SK-N-SH (cell line): ENCODE measurements at regions of chr16 and their contacts with region 1.

Region 1: GRCh38 chr16:1964506-1965395 is at the start of gene RPS2:
- DNase-seq: peak; percentile 100
- H3K4me3 ChIP-seq: peak within 1 kb of the TSS; percentile 86 to 98
- H3K27ac ChIP-seq: peak within 1 kb of the TSS; percentile 76 to 90
- H3K4me1 ChIP-seq: peaks cover 0 to 41% of the 10 kb centered on the region in 2 experiments; a peak in 1 of 4 replicates
- H3K27me3 ChIP-seq: no peaks in the 10 kb centered on the region
- CTCF ChIP-seq: 0 out of 2 replicates have a peak, but pooled peaks have one; percentile 5
- EP300 ChIP-seq: peak; percentile 16 to 27; a peak in 1 of 4 replicates
- RAD21 ChIP-seq: no peak
- polyA plus RNA-seq, gene RPS2: 4,622 and 6,384 TPM in 2 replicates

Region 2: DNA sequence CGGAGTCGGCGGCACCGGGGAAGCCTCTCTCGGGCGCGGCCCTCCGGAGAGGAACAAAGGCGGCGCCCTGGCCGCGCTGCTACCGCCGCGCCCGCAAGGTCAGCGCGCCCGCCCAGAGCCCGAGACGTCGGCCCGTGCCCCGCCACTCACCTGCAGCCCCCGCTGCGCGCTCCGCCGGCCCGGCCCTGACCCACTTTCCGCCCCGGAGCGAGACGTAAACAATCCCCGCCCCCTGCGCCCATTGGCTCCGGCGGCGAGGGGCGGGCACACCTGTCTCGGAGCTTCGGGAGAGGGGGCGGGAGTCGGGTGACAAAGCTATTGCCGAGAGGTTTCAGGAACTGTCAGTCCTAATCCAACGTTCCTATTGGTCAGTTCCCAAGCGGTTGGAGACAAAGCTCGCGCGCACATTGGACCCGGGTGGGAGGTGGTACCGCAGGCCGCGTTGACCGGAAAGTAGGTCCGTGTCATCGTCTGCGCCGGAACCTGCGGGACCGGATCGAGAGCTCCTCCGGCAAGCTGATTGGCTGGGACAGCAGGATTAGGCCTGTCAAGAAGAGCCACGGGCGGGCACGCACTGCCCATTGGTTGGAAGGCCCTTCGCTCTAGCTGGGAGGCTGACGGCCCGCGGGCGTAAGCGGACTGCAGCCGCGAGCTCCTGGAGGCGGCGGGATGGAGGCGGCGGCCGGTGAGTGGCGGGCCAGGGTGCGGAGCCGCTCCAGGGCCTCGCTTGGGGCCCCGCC is 182.2 kb before region 1 on chr16 and contains the starts of genes NUBP2 and SPSB3:
- CTCF ChIA-PET with region 1: no interaction called
- POLR2A ChIA-PET with region 1: interaction called, 10 read pairs
- DNase-seq: peak; percentile 97
- H3K4me3 ChIP-seq: peak within 1 kb of the TSS; percentile 84 to 90
- H3K27ac ChIP-seq: peak within 1 kb of the TSS; percentile 48 to 53
- H3K4me1 ChIP-seq: peaks cover 0 to 8% of the 10 kb centered on the region in 2 experiments; a peak in 1 of 4 replicates
- H3K27me3 ChIP-seq: no peaks in the 10 kb centered on the region
- CTCF ChIP-seq: no peak
- EP300 ChIP-seq: no peak
- RAD21 ChIP-seq: no peak
- polyA plus RNA-seq, gene NUBP2: 73.2 and 75.4 TPM in 2 replicates
- polyA plus RNA-seq, gene SPSB3: 40.6 and 41.6 TPM in 2 replicates

Region 3: DNA sequence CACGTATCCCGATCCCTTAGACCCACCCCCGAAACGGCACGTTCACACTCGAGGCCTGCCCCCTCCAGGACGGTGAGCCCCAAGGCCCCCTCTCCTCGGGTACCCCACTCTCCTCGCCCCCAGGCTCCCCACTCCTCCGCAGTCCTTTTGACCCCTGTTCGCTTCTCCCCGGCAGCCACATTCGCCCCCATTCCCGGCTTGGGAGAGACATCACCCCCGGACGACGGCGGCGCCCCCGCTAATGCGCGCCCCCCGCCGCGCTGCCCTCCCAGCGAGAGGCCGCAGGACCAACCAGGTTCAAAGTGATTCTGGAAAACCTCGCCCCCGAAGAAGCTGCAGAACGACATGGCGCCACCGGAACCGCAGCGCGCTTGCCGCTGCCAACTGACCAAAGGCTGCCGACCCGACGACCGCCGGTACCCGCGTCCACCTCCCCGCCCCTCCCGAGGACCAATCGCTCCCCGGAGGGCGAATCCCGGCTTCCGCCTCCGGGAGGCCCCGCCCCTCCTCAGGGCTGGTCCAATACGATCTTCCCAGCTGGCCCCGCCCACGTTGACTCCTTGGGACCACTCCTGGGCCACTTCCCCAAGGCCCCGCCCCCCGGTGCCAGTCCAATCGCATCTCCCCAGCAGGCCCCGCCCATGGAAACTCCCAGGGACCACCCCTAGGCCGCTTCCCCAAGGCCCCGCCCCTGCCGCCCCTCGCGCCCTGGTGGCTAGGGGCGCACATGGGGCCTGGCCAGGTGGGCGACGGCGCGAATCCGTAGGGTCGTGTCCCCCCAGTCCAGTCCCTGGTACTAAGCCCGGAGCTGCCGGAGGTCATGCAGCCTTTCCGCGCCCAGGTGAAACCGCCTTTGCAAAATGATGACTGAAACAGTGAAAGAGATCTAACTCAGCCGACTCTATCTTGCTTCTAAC is 21.7 kb before region 1 on chr16 and contains the start of gene MSRB1:
- CTCF ChIA-PET with region 1: interaction called, 8 read pairs
- POLR2A ChIA-PET with region 1: interaction called, 17 read pairs
- DNase-seq: peak; percentile 100
- H3K4me3 ChIP-seq: peak within 1 kb of the TSS; percentile 91 to 95
- H3K27ac ChIP-seq: peak within 1 kb of the TSS in 1 of 2 experiments; percentile 64; a peak in 1 of 4 replicates
- H3K4me1 ChIP-seq: peaks cover 0 to 10% of the 10 kb centered on the region in 2 experiments; a peak in 2 of 4 replicates
- H3K27me3 ChIP-seq: no peaks in the 10 kb centered on the region
- CTCF ChIP-seq: 0 out of 2 replicates have a peak, but pooled peaks have one; percentile 15
- EP300 ChIP-seq: no peak
- RAD21 ChIP-seq: no peak
- polyA plus RNA-seq, gene MSRB1: 30.1 and 31.4 TPM in 2 replicates

Region 4: DNA sequence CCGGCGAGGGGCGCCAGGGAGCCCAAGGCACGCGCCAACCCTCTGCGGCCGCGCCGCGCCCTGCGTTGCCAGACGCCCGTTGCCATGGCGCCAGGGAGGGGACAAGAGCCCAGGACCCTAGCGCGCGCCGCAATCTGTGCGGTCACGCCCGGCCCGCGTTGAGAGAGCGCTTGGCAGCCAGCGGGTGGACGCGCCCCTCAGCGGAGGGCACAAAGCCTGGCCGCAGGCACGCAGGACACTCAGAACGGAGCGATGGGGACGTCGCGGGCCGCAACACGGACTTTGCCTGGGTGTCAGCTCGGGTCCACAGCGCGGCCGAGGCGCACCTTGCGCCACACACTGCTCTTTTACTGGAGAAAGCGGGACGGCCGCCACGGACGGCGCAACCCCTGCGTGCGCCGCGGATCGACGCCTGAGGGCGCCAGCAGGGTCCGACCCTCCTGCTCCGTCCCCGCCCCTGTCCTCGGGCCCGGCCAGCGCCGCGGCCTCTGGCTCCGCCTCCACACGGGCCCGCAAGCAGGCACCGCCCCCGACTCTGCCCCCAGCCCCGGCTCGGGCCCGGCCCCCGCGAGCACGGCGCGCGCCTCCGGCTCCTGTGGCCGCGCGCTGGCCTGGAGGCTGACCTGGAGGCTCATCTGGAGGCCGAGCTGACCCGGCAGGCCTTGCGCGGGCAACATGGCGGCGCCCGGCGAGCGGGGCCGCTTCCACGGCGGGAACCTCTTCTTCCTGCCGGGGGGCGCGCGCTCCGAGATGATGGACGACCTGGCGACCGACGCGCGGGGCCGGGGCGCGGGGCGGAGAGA is 19.0 kb after region 1 on chr16 and contains the start of gene GFER:
- CTCF ChIA-PET with region 1: interaction called, 5 read pairs
- POLR2A ChIA-PET with region 1: interaction called, 12 read pairs
- DNase-seq: peak; percentile 99
- H3K4me3 ChIP-seq: peak within 1 kb of the TSS; percentile 77 to 80
- H3K27ac ChIP-seq: peak within 1 kb of the TSS; percentile 66 to 95
- H3K4me1 ChIP-seq: peaks cover 8 to 21% of the 10 kb centered on the region in 2 experiments; a peak in 2 of 4 replicates
- H3K27me3 ChIP-seq: no peaks in the 10 kb centered on the region
- CTCF ChIP-seq: peak; percentile 50
- EP300 ChIP-seq: no peak
- RAD21 ChIP-seq: no peak
- polyA plus RNA-seq, gene GFER: 13.3 and 20.4 TPM in 2 replicates